Heart left ventricle (tissue), 16 donors: ENCODE measurements at regions of chr1 and their contacts with region 1.

Region 1: GRCh38 chr1:203702130-203702577 is 62.8 kb upstream of the LAX1 start:
- DNase-seq: peak in 1 of 5 donors; percentile 40
- ATAC-seq: peak; percentile 36 to 68 (median 62)
- H3K4me3 ChIP-seq: no peak overlapping the region
- H3K27ac ChIP-seq: peak overlapping the region in 1 of 12 donors; percentile 89
- H3K4me1 ChIP-seq: peaks cover 0 to 16% (median 8%) of the 10 kb centered on the region in 12 donors
- H3K27me3 ChIP-seq: no peaks in the 10 kb centered on the region
- CTCF ChIP-seq: peak; percentile 59 to 85 (median 78)
- POLR2A ChIP-seq: no peak

Region 2: GRCh38 chr1:203351037-203352013 is 350.8 kb before region 1 on chr1 and contains the start of gene FMOD:
- intact Hi-C with region 1: loop called in 6 of 10 experiments (anchors 5 to 10 kb)
- DNase-seq: peak in 3 of 5 donors; percentile 59 to 75 (median 71)
- ATAC-seq: peak; percentile 56 to 86 (median 70)
- H3K4me3 ChIP-seq: peak within 1 kb of the TSS in 10 of 12 donors; percentile 5 to 60 (median 40)
- H3K27ac ChIP-seq: peak within 1 kb of the TSS in 11 of 12 donors; percentile 7 to 86 (median 48)
- H3K4me1 ChIP-seq: peaks cover 0 to 31% (median under 1%) of the 10 kb centered on the region in 12 donors
- H3K27me3 ChIP-seq: no peaks in the 10 kb centered on the region
- CTCF ChIP-seq: peak in 4 of 12 donors; percentile 11 to 32 (median 28)
- POLR2A ChIP-seq: no peak
- total RNA-seq, gene FMOD: 6.1 to 33.2 (median 8.5) TPM